ENCODE measurements at regions of chr17 and their contacts with region 1.

Region 1: DNA sequence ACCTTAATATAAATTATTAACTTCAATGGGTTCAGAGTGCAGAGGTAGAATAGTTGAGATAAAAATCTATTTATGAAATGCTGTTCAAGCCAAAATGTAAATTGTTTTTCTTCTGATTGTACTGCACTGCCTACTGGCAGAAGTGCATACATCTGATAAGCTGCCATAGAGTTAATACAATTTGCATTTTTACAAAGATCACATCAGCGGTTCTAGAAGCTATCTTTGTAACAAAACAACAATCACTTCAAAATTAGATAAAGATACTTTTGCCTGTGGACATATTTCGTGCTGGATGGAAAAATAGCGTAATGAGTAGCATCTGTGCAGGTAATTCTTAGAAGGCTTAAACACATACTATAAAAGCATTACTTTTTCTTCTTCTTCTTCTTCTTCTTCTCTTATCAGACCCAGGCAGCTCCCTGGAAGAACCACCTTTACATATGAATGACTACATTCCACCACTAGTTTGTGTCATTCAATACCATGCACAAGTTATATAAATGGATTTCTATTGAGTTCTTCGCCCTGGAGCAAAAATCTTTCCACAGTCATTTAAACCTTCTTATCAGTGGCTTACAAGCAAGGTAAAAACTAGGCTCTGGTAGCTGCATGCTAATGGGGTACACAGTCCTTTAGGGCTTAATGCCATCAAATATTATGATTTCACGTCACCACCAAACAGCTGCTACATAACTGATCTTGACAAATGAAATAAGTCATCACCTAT is 47.0 kb downstream of the SYNRG start:
- DNase-seq: no peak
- ATAC-seq: no peak
- H3K4me3 ChIP-seq: no peak overlapping the region
- H3K27ac ChIP-seq: no peak overlapping the region
- H3K4me1 ChIP-seq: no peaks in the 10 kb centered on the region
- H3K27me3 ChIP-seq: no peaks in the 10 kb centered on the region
- CTCF ChIP-seq: no peak

Region 2: DNA sequence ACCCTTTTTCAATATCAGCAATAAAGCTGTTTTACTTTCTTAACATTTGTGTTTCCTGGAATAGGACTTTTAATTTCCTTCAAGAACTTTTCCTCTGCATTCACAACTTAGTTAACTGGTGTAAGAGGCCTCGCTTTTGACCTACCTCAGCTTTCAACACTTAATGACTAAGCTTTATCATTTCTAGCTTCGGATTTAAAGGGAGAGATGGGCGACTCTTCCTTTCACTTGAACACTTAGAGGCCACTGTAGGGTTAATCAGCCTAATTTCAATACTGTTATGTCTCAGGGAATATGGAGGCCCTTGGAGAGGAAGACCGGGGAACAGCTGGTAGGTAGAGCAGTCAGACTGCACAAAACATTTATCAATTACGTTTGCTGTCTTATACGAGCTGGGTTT is 42.4 kb after region 1 on chr17:
- CTCF ChIA-PET with region 1: no interaction called
- POLR2A ChIA-PET with region 1: interaction called, 10 read pairs
- intact Hi-C with region 1: no loop called
- DNase-seq: no peak
- ATAC-seq: no peak
- H3K4me3 ChIP-seq: no peak overlapping the region
- H3K27ac ChIP-seq: no peak overlapping the region
- H3K4me1 ChIP-seq: peaks cover 21% of the 10 kb centered on the region
- H3K27me3 ChIP-seq: no peaks in the 10 kb centered on the region
- CTCF ChIP-seq: no peak